Activated CD8-positive, alpha-beta T cell treated with anti-CD3 and anti-CD28 coated beads for 36 hours (primary cell): ENCODE measurements at regions of chr11 and their contacts with region 1.

Region 1: DNA sequence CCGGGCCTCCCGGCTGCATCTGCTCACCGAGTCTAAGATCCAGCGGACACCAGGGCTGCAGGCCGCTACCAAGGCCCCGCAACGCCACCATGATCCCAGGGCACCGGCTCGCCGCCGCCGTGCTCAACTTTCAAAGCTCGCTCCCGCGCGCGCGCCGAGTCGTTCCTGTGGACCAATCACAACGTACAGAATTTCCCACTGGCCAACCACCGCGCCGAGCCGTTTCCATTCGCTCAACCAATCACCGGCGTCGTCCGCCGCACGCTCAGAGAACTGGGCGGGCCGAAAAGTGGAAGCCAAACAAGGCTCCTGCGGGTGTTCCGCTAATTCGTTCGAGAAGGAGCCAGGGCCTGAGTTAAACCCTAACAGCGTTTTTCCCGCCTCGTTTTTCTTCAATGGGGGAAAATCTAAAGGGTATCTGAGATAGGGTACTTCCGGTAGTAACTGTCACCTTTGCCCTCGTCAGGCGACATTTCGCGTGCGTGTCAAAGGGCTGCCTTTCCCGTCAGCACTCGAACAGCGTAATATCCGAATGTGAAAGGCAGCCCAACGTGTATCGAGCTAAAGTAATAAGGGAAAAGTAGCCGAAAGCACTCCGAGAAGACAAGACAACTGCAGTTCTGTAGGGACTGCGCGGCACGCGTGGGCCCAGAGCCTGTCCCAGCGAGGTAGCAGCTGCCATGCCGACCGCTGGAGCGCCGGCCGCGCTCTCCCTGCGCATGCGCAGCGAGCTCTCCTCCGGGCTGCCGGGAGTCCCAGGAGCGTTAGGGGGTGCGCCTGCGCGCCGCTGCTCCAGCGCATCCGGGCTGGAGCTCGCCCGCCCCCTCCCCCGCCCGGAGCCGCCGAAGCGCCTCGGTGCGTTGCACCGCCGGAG is at the starts of genes NCAPD3 and VPS26B:
- DNase-seq: peak; percentile 99
- ATAC-seq: peak; percentile 78
- H3K4me3 Mint-ChIP-seq: peak within 1 kb of the TSS; percentile 95
- H3K27ac Mint-ChIP-seq: peak within 1 kb of the TSS; percentile 96
- H3K4me1 Mint-ChIP-seq: peaks cover 58% of the 10 kb centered on the region
- H3K27me3 Mint-ChIP-seq: no peaks in the 10 kb centered on the region
- CTCF ChIP-seq: no peak
- total RNA-seq, gene NCAPD3: 98.4 to 102 TPM
- total RNA-seq, gene VPS26B: 35.6 TPM

Region 2: DNA sequence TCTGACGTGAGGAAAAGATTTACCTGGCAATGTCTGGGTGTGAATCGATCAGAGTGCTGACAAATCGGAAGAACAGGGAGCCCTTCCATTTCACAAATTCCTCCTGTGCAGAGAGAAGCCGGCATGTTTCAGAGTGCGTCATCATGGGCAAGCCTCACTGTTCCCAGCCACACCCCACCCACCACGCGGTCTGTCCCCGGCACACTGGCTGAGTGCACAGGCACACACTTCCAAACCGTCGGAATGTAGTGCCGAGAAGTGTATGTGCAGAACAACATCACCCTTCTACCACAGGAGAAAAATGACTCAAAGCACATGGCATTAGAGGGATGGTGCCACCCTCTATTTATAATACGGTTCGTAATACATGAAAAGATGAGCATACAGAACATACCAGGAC is 47.8 kb before region 1 on chr11:
- CTCF ChIA-PET with region 1: no interaction called
- POLR2A ChIA-PET with region 1: no interaction called
- intact Hi-C with region 1: no loop called
- DNase-seq: no peak
- ATAC-seq: no peak
- H3K4me3 Mint-ChIP-seq: no peak overlapping the region
- H3K27ac Mint-ChIP-seq: no peak overlapping the region
- H3K4me1 Mint-ChIP-seq: no peaks in the 10 kb centered on the region
- H3K27me3 Mint-ChIP-seq: no peaks in the 10 kb centered on the region
- CTCF ChIP-seq: no peak

Region 3: DNA sequence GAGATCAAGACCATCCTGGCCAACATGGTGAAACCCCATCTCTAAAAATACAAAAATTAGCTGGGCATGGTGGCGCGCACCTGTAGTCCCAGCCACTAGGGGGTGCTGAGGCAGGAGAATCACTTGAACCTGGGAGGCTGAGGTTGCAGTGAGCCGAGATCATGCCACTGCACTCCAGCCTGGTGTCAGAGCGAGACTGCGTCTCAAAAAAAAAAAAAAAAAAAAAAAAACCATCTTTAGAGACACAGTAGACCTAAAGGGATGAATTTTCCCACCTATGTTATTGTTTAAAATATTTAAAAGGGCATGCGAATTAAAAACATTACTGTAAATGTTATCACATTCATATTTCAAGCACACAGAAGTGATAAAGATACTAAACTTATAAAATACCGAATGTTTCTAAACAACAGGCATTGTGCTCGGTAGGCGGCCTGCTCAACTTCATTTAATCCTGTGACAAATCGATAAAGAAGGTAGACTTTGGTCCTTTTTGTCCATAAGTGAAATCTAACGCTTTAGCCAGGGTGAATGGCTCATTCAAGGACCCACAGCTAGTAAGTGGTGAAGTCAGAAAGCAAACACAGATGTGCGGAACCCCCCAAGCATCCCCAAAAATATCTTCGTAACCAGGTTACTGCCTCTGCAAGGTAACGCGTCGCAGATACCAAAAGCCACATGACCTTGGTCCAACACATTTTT is 16.4 kb before region 1 on chr11:
- CTCF ChIA-PET with region 1: interaction called, 18 read pairs
- POLR2A ChIA-PET with region 1: interaction called, 6 read pairs
- intact Hi-C with region 1: no loop called
- DNase-seq: peak; percentile 79
- ATAC-seq: peak; percentile 42
- H3K4me3 Mint-ChIP-seq: no peak overlapping the region
- H3K27ac Mint-ChIP-seq: no peak overlapping the region
- H3K4me1 Mint-ChIP-seq: peaks cover 3% of the 10 kb centered on the region
- H3K27me3 Mint-ChIP-seq: no peaks in the 10 kb centered on the region
- CTCF ChIP-seq: peak; percentile 85

Region 4: GRCh38 chr11:134244655-134245054 is 20.6 kb after region 1 on chr11:
- CTCF ChIA-PET with region 1: interaction called, 8 read pairs
- POLR2A ChIA-PET with region 1: interaction called, 13 read pairs
- intact Hi-C with region 1: no loop called
- DNase-seq: no peak
- ATAC-seq: peak; percentile 50
- H3K4me3 Mint-ChIP-seq: no peak overlapping the region
- H3K27ac Mint-ChIP-seq: no peak overlapping the region
- H3K4me1 Mint-ChIP-seq: peaks cover 10% of the 10 kb centered on the region
- H3K27me3 Mint-ChIP-seq: no peaks in the 10 kb centered on the region
- CTCF ChIP-seq: peak; percentile 61

Region 5: DNA sequence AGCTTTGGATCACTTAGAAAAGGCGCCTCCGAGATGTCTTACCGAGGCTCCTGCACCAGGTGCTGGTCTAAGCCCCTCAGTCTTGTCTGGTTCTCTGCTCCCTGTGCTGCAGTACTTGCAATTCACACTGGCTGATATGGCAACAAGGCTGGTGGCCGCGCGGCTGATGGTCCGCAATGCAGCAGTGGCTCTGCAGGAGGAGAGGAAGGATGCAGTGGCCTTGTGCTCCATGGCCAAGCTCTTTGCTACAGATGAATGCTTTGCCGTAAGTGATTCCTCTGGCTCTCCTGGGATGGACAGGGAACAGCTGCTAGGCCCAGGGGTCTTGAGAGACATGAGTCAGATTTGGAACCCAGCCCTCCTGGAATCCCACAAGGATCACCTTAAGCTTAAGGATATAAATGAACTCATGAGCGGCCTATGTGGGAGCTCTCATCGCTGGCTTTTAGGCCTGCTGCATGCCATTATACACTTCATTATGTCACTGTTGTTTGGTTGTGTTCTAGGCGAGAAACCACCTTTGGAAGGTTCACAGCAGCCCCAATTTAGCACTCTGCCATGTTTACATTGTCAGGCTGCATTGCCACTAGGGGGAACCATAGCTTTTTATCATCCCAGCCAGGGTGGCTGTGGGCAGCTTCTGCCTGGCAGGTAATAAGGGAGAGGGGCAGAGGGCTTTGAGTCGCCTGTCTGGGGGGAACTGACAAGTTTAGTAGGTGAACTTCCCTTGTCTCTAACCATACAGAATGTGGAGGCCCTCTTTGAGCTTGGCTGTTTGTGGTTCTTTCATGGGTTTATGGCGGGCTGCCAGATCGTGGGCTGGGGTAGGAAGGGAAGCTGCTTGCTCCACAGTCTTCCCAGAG is 37.8 kb after region 1 on chr11:
- CTCF ChIA-PET with region 1: interaction called, 10 read pairs
- POLR2A ChIA-PET with region 1: no interaction called
- intact Hi-C with region 1: no loop called
- DNase-seq: peak; percentile 51
- ATAC-seq: peak; percentile 87
- H3K4me3 Mint-ChIP-seq: no peak overlapping the region
- H3K27ac Mint-ChIP-seq: no peak overlapping the region
- H3K4me1 Mint-ChIP-seq: no peaks in the 10 kb centered on the region
- H3K27me3 Mint-ChIP-seq: no peaks in the 10 kb centered on the region
- CTCF ChIP-seq: peak; percentile 32

Region 6: GRCh38 chr11:134317103-134317502 is 93.0 kb after region 1 on chr11:
- CTCF ChIA-PET with region 1: no interaction called
- POLR2A ChIA-PET with region 1: no interaction called
- intact Hi-C with region 1: no loop called
- DNase-seq: no peak
- ATAC-seq: no peak
- H3K4me3 Mint-ChIP-seq: no peak overlapping the region
- H3K27ac Mint-ChIP-seq: no peak overlapping the region
- H3K4me1 Mint-ChIP-seq: no peaks in the 10 kb centered on the region
- H3K27me3 Mint-ChIP-seq: peaks cover 11% of the 10 kb centered on the region
- CTCF ChIP-seq: no peak